Ovary (tissue), 10 donors: ENCODE measurements at regions of chr20 and their contacts with region 1.

Region 1: GRCh38 chr20:50308513-50309279 is 118.1 kb downstream of the CEBPB start:
- DNase-seq: peak; percentile 92 to 97 (median 95)
- H3K4me3 ChIP-seq: no peak overlapping the region
- H3K27ac ChIP-seq: peak overlapping the region; percentile 84 to 97
- H3K4me1 ChIP-seq: peaks cover 36% of the 10 kb centered on the region
- H3K27me3 ChIP-seq: no peaks in the 10 kb centered on the region
- CTCF ChIP-seq: no peak
- EP300 ChIP-seq: peak; percentile 75
- POLR2A ChIP-seq: peak; percentile 71

Region 2: GRCh38 chr20:50181364-50181763 is 127.3 kb before region 1 on chr20:
- intact Hi-C with region 1: no loop called
- DNase-seq: no peak
- H3K4me3 ChIP-seq: no peak overlapping the region
- H3K27ac ChIP-seq: no peak overlapping the region
- H3K4me1 ChIP-seq: no peaks in the 10 kb centered on the region
- H3K27me3 ChIP-seq: no peaks in the 10 kb centered on the region
- CTCF ChIP-seq: no peak
- EP300 ChIP-seq: no peak
- POLR2A ChIP-seq: no peak

Region 3: DNA sequence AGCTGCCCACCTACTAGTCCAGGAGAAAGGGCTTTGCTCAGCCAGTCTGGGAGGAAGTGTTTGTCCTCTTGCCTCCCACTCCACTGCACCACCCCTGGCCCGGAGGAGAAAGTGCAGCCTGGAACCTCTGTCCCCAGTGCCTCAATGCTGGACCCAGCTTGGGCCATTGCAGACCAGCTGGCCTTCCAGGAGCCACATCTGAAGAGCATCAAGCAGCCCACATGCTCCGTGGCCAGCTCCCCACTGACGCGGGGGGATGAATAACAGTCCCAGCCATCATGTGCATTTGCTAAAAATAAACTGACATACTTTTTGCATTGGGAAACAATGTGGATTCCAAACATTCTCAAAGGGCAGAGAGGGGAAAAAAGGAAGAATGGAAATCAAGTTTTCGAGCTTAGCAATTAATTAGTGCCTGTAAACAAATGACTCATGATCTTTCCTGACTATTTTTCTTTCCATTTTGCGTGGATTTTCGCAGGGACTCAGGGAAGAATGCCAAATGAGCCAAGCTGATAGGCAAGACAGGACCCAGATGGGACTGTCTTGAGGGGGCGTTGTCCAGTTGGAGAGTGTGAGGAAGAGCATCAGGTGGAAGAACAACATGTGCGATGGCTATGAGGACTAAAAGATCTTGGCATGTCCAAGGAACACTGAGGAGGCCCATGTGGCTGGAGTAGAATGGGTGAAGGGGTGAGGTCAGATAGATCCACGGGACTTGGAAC is 84.0 kb before region 1 on chr20:
- intact Hi-C with region 1: loop called in 1 of 4 experiments (anchors 5 kb)
- DNase-seq: peak; percentile 80 to 91 (median 86)
- H3K4me3 ChIP-seq: no peak overlapping the region
- H3K27ac ChIP-seq: peak overlapping the region; percentile 84 to 89
- H3K4me1 ChIP-seq: peaks cover 11% of the 10 kb centered on the region
- H3K27me3 ChIP-seq: no peaks in the 10 kb centered on the region
- CTCF ChIP-seq: peak; percentile 1 to 51 (median 39)
- EP300 ChIP-seq: peak; percentile 88
- POLR2A ChIP-seq: peak; percentile 33

Region 4: GRCh38 chr20:50267041-50267865 is 41.4 kb before region 1 on chr20:
- intact Hi-C with region 1: no loop called
- DNase-seq: no peak
- H3K4me3 ChIP-seq: no peak overlapping the region
- H3K27ac ChIP-seq: no peak overlapping the region
- H3K4me1 ChIP-seq: peaks cover 3% of the 10 kb centered on the region
- H3K27me3 ChIP-seq: no peaks in the 10 kb centered on the region
- CTCF ChIP-seq: no peak
- EP300 ChIP-seq: no peak
- POLR2A ChIP-seq: no peak

Region 5: GRCh38 chr20:50379049-50379990 is 70.6 kb after region 1 on chr20:
- intact Hi-C with region 1: no loop called
- DNase-seq: peak; percentile 92 to 98 (median 95)
- H3K4me3 ChIP-seq: no peak overlapping the region
- H3K27ac ChIP-seq: peak overlapping the region; percentile 41 to 49
- H3K4me1 ChIP-seq: peaks cover 15% of the 10 kb centered on the region
- H3K27me3 ChIP-seq: no peaks in the 10 kb centered on the region
- CTCF ChIP-seq: peak in 1 of 3 donors; percentile 26
- EP300 ChIP-seq: no peak
- POLR2A ChIP-seq: peak; percentile 82

Region 6: GRCh38 chr20:50415516-50416113 is 106.9 kb after region 1 on chr20:
- intact Hi-C with region 1: loop called in 1 of 4 experiments (anchors 5 kb)
- DNase-seq: peak; percentile 97 to 100 (median 99)
- H3K4me3 ChIP-seq: no peak overlapping the region
- H3K27ac ChIP-seq: peak overlapping the region; percentile 83 to 86
- H3K4me1 ChIP-seq: peaks cover 9% of the 10 kb centered on the region
- H3K27me3 ChIP-seq: no peaks in the 10 kb centered on the region
- CTCF ChIP-seq: peak in 2 of 3 donors; percentile 2 to 14
- EP300 ChIP-seq: peak; percentile 100
- POLR2A ChIP-seq: peak; percentile 65

Region 7: GRCh38 chr20:50450881-50451752 is 142.4 kb after region 1 on chr20:
- intact Hi-C with region 1: loop called in 1 of 4 experiments (anchors 10 kb)
- DNase-seq: peak in 3 of 5 donors; percentile 51 to 68 (median 55)
- H3K4me3 ChIP-seq: peak overlapping the region; percentile 6
- H3K27ac ChIP-seq: peak overlapping the region; percentile 39 to 46
- H3K4me1 ChIP-seq: peaks cover 6% of the 10 kb centered on the region
- H3K27me3 ChIP-seq: no peaks in the 10 kb centered on the region
- CTCF ChIP-seq: no peak
- EP300 ChIP-seq: no peak
- POLR2A ChIP-seq: no peak